Right cardiac atrium (tissue), 5 donors: ENCODE measurements at regions of chr11 and their contacts with region 1.

Region 1: GRCh38 chr11:16613512-16614381 is 124.7 kb upstream of the C11orf58 start:
- DNase-seq: peak; percentile 92 to 96 (median 95)
- ATAC-seq: peak; percentile 96 to 98
- H3K4me3 ChIP-seq: peak overlapping the region; percentile 44
- H3K27ac ChIP-seq: peak overlapping the region; percentile 70
- H3K4me1 ChIP-seq: peaks cover 2% of the 10 kb centered on the region
- H3K27me3 ChIP-seq: no peaks in the 10 kb centered on the region

Region 2: DNA sequence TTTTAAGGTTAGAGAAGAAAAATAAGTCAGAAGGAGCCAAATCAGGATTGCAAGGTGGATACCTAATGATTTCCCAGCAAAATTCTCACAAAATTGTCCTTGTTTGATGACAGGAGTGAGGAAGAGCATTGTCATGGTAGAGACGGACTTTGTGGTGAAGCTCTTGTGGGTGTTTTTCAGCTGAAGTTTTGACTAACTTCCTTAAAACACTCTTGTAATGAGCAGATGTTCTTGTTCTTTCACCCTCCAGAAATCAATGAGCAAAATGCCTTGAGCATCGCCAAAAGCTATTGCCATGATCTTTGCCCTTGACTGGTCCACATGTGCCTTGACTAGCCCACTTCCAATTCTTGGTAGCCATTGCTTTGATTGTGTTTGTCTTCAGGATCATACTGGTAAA is 1520.3 kb before region 1 on chr11:
- intact Hi-C with region 1: loop called in 1 of 4 experiments (anchors 10 kb)
- DNase-seq: no peak
- ATAC-seq: no peak
- H3K4me3 ChIP-seq: no peak overlapping the region
- H3K27ac ChIP-seq: no peak overlapping the region
- H3K4me1 ChIP-seq: no peaks in the 10 kb centered on the region
- H3K27me3 ChIP-seq: peaks cover under 1% of the 10 kb centered on the region

Region 3: GRCh38 chr11:15327786-15328231 is 1285.9 kb before region 1 on chr11:
- intact Hi-C with region 1: loop called in 1 of 4 experiments (anchors 10 kb)
- DNase-seq: peak; percentile 59 to 84 (median 79)
- ATAC-seq: peak; percentile 78 to 81
- H3K4me3 ChIP-seq: no peak overlapping the region
- H3K27ac ChIP-seq: no peak overlapping the region
- H3K4me1 ChIP-seq: no peaks in the 10 kb centered on the region
- H3K27me3 ChIP-seq: no peaks in the 10 kb centered on the region

Region 4: DNA sequence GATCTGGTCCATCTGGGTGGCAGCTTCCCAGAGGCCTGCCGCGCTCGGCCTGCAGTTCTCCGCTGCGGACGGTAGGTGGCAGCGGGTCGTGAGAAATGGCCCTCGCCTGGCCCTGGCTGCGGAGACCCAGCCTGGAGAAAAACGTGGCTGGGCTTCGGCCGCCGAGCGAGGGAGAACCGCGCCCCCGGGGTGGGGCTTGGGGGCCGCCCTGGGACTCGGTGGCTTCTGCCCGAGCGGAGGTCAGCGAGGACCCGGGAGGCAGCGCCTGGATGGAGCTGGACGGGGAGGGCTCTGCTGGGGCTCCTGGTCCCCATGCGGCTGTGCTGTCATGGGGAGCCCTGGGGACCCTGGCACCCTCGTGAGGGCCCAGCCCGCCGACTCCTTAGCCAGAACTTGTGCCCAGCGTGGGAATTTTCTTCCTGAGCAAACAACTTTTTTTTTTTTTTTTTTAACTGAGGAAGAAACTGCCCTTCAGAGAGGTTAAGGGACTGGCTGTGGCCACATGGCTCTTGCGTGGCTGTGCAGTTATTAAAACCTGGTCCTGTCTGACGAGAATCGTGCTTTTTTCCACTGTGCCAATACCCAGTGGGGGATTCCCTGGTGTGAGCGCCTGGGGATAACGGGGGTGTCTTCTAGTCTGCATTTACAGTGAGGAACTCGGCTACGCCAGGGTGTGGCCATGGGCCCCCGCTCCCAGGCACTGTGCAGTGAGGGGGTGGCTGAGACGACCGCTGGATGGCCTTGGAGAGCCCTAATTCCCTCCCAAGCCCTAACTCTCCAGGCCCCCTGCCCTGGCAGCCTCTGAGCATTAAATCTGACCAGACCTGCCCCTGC is 963.4 kb before region 1 on chr11:
- intact Hi-C with region 1: loop called in 3 of 4 experiments (anchors 5 to 10 kb)
- DNase-seq: peak; percentile 96 to 99 (median 99)
- ATAC-seq: peak; percentile 98 to 100
- H3K4me3 ChIP-seq: peak overlapping the region; percentile 13
- H3K27ac ChIP-seq: peak overlapping the region; percentile 40
- H3K4me1 ChIP-seq: peaks cover 6% of the 10 kb centered on the region
- H3K27me3 ChIP-seq: no peaks in the 10 kb centered on the region

Region 5: GRCh38 chr11:15835788-15836411 is 777.8 kb before region 1 on chr11:
- intact Hi-C with region 1: loop called in 1 of 4 experiments (anchors 10 kb)
- DNase-seq: peak in 2 of 3 donors; percentile 27 to 54
- ATAC-seq: peak; percentile 35 to 43
- H3K4me3 ChIP-seq: no peak overlapping the region
- H3K27ac ChIP-seq: no peak overlapping the region
- H3K4me1 ChIP-seq: no peaks in the 10 kb centered on the region
- H3K27me3 ChIP-seq: no peaks in the 10 kb centered on the region

Region 6: DNA sequence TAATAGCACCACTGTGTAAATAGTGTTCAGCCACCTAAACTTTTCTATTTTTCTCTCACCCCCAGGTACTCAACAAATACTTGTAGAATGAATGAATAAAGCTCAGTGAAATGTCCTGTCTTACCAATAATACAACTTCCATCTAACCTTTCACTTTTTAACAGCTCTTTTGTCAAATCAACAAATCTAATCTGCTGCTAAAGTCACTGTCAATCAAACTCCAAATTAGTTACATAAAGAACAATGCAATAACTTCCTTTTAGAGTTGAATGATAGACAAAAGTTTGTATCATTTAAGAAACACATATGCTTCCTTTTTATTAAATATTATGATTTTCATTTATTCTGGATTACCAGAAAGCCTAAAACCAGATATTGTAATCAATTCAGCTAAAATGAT is 90.0 kb after region 1 on chr11:
- intact Hi-C with region 1: no loop called
- DNase-seq: no peak
- ATAC-seq: no peak
- H3K4me3 ChIP-seq: no peak overlapping the region
- H3K27ac ChIP-seq: no peak overlapping the region
- H3K4me1 ChIP-seq: no peaks in the 10 kb centered on the region
- H3K27me3 ChIP-seq: no peaks in the 10 kb centered on the region